MCF 10A (cell line): ENCODE measurements at regions of chr6 and their contacts with region 1.

Region 1: DNA sequence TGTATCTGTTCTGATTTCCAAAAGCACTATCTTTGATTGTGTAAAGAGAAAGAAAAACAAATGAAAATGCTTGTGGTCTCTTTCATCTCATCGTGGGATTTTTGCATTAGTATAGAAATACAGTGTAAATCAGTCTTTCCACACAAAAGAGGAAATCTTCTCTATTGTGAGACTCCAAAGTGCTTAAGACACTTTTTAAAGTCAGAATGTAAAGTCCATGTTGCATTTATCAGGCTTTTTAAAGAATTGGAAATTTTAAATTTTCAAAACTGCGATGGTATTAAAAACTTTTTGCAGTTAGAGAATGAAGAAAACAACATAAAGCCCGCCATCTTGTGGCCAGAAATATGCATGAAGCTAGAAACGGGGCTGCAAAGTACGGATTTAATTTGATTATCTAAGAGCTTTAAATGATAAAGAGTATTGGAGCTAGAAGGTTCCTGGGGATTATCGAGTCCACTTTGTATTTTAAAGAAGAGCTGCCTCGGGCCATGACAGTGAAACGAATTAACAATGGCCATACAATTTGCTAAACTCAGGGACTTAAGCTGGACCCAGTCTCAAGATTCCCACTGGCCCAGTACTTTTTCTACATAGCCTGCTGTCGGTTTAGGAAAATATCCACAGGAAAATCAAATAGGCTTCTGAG is 339.6 kb downstream of the ARHGAP18 start:
- DNase-seq: peak; percentile 66
- H3K4me3 Mint-ChIP-seq: no peak overlapping the region
- H3K27ac Mint-ChIP-seq: no peak overlapping the region
- H3K4me1 Mint-ChIP-seq: no peaks in the 10 kb centered on the region
- H3K27me3 Mint-ChIP-seq: no peaks in the 10 kb centered on the region
- CTCF ChIP-seq: peak; percentile 75

Region 2: DNA sequence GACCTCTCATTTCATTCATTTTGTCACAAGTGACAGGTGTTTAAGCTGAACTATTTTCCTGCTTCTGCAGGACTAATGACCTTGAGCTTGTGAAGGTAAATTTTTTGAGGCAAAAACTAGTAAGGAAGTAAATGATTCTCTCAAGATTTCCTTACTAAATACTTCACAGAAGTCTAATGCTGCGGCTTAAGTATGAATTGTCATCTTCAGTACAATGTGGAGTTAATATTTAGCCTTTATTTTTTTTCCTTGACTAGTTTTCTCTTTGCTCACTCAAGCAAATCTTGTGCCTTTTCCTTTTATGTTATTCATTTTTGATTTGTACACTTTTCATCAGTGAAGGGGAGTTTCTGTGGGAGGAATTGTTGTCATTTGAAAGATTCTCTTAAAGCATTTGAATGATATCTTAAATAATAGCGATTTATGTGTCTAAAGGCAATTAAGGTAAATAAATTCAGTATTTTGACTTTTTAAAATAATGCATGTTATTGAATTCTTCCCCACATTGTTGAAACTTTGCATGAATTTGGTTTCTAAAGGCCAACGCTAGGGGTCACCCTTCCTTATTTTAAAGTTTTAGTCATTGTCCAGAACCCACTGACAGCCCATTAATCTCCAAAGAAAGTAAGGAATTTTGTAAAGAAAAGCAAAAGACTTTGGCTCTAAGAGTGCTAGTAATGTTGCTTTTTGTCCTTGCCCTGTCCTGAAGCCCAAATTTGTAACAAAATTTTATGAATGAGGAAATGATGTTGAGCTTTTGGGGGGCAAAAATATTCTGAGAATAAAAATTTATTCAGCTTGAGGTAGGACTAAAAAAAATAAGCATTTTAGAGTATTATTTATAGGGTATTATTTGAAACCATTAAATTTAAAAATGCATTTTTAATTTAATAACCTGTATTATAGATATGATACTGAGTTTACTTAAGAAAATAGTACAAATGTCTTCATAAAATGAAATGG is 644.8 kb before region 1 on chr6:
- CTCF ChIA-PET with region 1: interaction called, 3 read pairs
- POLR2A ChIA-PET with region 1: no interaction called
- intact Hi-C with region 1: loop called (anchors 5 kb)
- DNase-seq: peak; percentile 53
- H3K4me3 Mint-ChIP-seq: no peak overlapping the region
- H3K27ac Mint-ChIP-seq: no peak overlapping the region
- H3K4me1 Mint-ChIP-seq: no peaks in the 10 kb centered on the region
- H3K27me3 Mint-ChIP-seq: no peaks in the 10 kb centered on the region
- CTCF ChIP-seq: peak; percentile 58

Region 3: DNA sequence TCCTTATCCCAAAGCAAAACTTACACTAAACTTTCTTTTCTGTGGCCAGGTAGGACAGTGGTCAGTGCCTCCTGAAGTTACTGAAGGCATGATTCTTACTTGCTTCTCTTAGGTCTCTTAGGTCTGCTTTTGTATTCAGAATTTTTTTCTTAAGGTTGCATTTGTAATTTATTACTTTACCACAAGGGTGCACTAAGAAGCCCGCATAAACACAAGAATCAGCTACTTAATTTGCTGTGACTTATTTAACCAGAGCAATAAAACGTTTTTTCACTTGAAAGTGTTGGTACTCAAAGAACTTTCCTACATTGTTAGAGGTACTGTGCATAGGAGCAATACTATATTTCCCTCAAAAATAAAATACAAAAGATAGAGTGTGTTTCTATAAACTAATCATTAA is 562.8 kb before region 1 on chr6:
- CTCF ChIA-PET with region 1: interaction called, 7 read pairs
- POLR2A ChIA-PET with region 1: no interaction called
- intact Hi-C with region 1: loop called (anchors 1 kb)
- DNase-seq: peak; percentile 37
- H3K4me3 Mint-ChIP-seq: no peak overlapping the region
- H3K27ac Mint-ChIP-seq: no peak overlapping the region
- H3K4me1 Mint-ChIP-seq: no peaks in the 10 kb centered on the region
- H3K27me3 Mint-ChIP-seq: peaks cover 54% of the 10 kb centered on the region
- CTCF ChIP-seq: peak; percentile 49

Region 4: DNA sequence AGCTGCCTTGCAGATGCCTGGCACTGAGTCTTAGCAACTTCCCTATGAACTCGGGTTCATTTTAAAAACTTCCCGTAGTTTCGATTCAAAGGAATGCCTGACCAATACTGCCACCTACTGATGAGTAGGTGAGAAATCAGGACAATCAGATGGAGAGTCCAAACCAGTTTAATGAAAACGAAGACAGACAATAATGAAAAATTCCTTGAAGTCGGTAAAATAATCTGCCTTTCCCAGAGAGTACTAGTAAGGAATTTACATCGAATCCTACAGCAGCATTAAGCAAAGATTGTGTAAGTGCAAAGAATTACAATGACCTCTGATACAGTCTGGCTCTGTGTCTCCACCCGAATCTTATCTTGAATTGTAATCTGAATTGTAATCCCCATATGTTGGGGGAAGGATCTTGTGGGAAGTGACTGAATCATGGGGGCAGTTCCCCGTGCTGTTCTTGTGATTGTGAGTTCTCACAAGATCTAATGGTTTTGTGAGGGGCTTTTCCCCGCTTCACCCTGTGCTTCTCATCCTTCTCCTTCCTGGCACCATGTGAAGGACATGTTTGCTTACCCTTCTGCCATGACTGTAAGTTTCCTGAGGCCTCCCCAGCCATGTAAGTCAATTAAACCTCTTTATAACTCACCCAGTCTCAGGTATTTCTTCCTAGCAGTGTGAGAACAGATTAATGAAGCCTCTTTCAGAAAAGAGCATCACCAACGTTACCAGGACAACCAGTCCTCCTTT is 205.2 kb after region 1 on chr6:
- CTCF ChIA-PET with region 1: no interaction called
- POLR2A ChIA-PET with region 1: no interaction called
- intact Hi-C with region 1: loop called (anchors 2 kb)
- DNase-seq: peak; percentile 68
- H3K4me3 Mint-ChIP-seq: no peak overlapping the region
- H3K27ac Mint-ChIP-seq: peak overlapping the region; percentile 36
- H3K4me1 Mint-ChIP-seq: no peaks in the 10 kb centered on the region
- H3K27me3 Mint-ChIP-seq: no peaks in the 10 kb centered on the region
- CTCF ChIP-seq: peak; percentile 77

Region 5: DNA sequence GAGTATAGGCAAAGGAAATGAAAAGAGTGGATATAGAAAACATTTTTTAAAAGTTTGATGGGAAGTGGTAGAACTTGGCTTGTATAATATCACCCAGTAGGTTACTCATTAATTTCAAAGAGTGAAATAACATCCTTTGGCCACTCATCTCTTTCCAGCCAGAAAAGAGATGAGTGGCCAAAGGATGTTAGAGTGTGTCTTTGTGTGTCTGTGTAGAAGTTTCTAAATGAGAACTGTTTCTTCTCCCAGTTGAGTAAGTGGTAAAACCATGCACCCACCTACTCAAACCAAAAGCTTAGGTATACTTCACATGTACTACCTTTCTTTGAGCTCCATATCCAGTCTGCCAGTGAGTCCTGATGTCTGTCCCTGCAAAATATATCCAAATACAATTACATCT is 538.5 kb after region 1 on chr6:
- CTCF ChIA-PET with region 1: no interaction called
- POLR2A ChIA-PET with region 1: no interaction called
- intact Hi-C with region 1: no loop called
- DNase-seq: no peak
- H3K4me3 Mint-ChIP-seq: no peak overlapping the region
- H3K27ac Mint-ChIP-seq: no peak overlapping the region
- H3K4me1 Mint-ChIP-seq: no peaks in the 10 kb centered on the region
- H3K27me3 Mint-ChIP-seq: no peaks in the 10 kb centered on the region
- CTCF ChIP-seq: no peak